H1 (cell line): ENCODE measurements at regions of chr13 and their contacts with region 1.

Region 1: DNA sequence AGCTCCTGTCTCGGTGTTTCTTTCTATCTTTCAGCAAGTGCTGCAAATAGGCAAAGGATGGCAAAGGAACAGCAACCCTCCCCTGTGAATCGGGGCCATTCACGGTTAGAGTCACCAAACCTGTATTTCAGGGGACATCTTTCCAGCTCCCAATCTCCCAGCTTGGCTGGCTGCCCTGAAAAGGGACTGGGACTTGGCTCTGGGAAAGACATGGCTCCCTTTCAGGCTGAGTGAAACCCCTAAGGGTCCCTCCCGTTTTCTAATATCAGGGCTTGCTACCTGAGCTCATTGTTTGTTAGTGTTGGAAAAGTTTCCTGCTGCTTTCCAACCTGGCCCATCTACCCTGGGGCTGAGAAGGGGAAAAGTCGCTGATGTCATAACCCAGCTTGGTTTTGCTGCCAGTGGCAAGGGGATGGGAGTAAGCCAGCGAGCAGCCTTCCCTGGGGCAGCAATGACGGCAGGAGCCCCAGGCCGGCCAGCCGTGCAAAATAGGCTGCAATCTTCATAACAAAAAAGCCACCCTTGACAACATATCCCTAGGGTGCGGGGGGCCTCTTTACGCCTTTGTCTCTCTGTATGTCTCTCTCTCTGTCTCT is 29.9 kb downstream of the SERP2 start:
- DNase-seq: no peak
- H3K4me3 ChIP-seq: peak overlapping the region; percentile 2 to 44 (median 11); a peak in 4 of 8 replicates
- H3K27ac ChIP-seq: 0 out of 2 replicates have a peak overlapping the region, but pooled peaks have one; percentile 55
- H3K4me1 ChIP-seq: peaks cover 16 to 53% (median 34%) of the 10 kb centered on the region in 4 experiments
- H3K27me3 ChIP-seq: no peaks in the 10 kb centered on the region
- CTCF ChIP-seq: no peak
- EP300 ChIP-seq: no peak
- POLR2A ChIP-seq: no peak
- RAD21 ChIP-seq: no peak

Region 2: DNA sequence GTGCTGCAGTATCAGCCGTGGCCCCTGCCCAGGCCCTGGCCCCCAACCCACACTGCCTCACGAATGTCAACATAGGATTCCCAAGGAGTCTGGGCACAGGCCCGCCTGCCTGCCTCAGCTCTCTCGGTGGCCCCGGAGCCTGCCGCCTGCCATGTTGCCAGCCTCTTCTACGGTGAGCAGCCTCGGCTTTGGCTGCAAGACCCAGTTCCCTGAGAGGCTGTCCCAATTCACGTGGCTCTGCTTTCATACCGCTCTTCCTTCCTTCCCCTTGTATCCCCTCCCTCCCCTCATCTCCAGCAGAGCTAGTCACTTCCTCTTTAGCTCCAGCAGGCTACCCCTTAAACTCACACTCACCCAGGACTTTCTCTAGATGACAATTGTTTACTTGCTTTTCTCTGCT is 12.7 kb after region 1 on chr13:
- CTCF ChIA-PET with region 1: interaction called, 7 read pairs
- POLR2A ChIA-PET with region 1: interaction called, 27 read pairs
- DNase-seq: no peak
- H3K4me3 ChIP-seq: no peak overlapping the region
- H3K27ac ChIP-seq: no peak overlapping the region
- H3K4me1 ChIP-seq: peaks cover 8 to 21% (median 12%) of the 10 kb centered on the region in 4 experiments
- H3K27me3 ChIP-seq: no peaks in the 10 kb centered on the region
- CTCF ChIP-seq: no peak
- EP300 ChIP-seq: no peak
- POLR2A ChIP-seq: no peak
- RAD21 ChIP-seq: no peak